Ovary (tissue), 10 donors: ENCODE measurements at regions of chr5 and their contacts with region 1.

Region 1: GRCh38 chr5:79837761-79838605 is 148.3 kb downstream of the CMYA5 start:
- DNase-seq: peak; percentile 59 to 76 (median 69)
- H3K4me3 ChIP-seq: no peak overlapping the region
- H3K27ac ChIP-seq: peak overlapping the region in 1 of 2 donors; percentile 38
- H3K4me1 ChIP-seq: peaks cover 7% of the 10 kb centered on the region
- H3K27me3 ChIP-seq: no peaks in the 10 kb centered on the region
- CTCF ChIP-seq: no peak
- EP300 ChIP-seq: no peak
- POLR2A ChIP-seq: no peak

Region 2: DNA sequence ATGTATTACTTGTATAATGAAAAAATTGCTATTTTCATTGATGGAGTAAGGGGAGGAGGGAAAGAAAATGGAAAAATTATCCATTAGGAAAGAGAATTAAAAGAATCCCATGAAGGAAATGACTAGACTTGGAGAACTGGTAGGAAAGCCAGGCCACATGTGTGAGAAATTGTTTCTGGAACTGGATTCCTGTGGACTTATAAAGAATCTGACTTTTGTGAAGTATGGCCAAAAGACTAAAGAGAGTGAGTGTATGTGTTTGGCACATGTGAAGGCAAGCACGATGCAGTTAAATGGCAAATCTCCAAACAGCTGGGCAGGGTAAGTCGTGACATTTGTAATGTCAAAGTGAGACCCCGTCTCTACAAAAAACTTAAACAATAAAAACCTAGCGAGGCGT is 63.6 kb after region 1 on chr5:
- intact Hi-C with region 1: loop called in 1 of 4 experiments (anchors 2 kb)
- DNase-seq: no peak
- H3K4me3 ChIP-seq: no peak overlapping the region
- H3K27ac ChIP-seq: no peak overlapping the region
- H3K4me1 ChIP-seq: no peaks in the 10 kb centered on the region
- H3K27me3 ChIP-seq: no peaks in the 10 kb centered on the region
- CTCF ChIP-seq: no peak
- EP300 ChIP-seq: no peak
- POLR2A ChIP-seq: no peak